ENCODE measurements at regions of chr11 and their contacts with region 1.

Region 1: DNA sequence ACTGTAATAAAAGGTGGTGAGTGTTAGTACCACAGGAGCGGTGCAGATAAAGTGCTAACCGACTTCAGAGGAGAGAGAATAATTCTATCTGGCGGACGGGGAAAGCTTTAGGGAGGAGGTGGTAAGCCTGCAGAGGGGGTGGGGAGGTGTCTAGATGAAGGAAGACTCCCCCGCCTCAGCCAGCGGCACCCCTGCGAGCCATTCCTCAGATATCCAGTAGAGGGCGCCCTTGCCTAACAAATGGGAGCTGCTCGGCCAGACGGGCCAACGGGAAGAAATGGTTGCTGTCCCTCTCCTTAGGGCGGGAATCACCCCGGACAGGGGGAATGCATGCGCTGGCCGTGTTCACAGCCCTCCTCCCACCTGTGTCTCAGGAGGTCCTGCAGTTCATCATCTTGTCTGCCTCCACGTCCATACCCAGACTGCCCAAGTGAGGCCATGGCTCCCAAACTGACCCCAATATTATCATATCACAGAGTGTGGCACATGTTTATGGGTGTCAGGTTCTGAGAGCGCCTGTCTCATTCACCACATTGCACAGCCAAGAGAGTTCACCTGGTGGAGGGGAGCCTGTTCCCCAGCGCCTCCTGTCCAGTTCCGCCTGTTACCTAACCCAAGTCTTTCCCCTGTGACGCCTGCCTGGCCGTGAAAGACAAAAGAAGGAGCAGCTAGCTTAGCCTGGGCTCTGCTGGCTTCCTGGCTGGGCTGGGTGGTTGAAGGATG is 85.5 kb downstream of the ST3GAL4 start:
- DNase-seq: peak; percentile 90 to 97 (median 95)
- H3K4me3 ChIP-seq: peak overlapping the region in 1 of 3 donors; percentile 14
- H3K27ac ChIP-seq: no peak overlapping the region
- H3K4me1 ChIP-seq: peaks cover 0 to 3% (median 0%) of the 10 kb centered on the region in 3 donors
- H3K27me3 ChIP-seq: no peaks in the 10 kb centered on the region
- CTCF ChIP-seq: peak; percentile 95

Region 2: GRCh38 chr11:126502159-126502558 is 61.2 kb after region 1 on chr11:
- intact Hi-C with region 1: loop called (anchors 10 kb)
- DNase-seq: no peak
- H3K4me3 ChIP-seq: no peak overlapping the region
- H3K27ac ChIP-seq: no peak overlapping the region
- H3K4me1 ChIP-seq: no peaks in the 10 kb centered on the region
- H3K27me3 ChIP-seq: no peaks in the 10 kb centered on the region
- CTCF ChIP-seq: no peak

Region 3: GRCh38 chr11:126834149-126834548 is 393.2 kb after region 1 on chr11:
- intact Hi-C with region 1: no loop called
- DNase-seq: no peak
- H3K4me3 ChIP-seq: no peak overlapping the region
- H3K27ac ChIP-seq: no peak overlapping the region
- H3K4me1 ChIP-seq: peaks cover 0 to 6% (median 0%) of the 10 kb centered on the region in 3 donors
- H3K27me3 ChIP-seq: no peaks in the 10 kb centered on the region
- CTCF ChIP-seq: no peak

Region 4: DNA sequence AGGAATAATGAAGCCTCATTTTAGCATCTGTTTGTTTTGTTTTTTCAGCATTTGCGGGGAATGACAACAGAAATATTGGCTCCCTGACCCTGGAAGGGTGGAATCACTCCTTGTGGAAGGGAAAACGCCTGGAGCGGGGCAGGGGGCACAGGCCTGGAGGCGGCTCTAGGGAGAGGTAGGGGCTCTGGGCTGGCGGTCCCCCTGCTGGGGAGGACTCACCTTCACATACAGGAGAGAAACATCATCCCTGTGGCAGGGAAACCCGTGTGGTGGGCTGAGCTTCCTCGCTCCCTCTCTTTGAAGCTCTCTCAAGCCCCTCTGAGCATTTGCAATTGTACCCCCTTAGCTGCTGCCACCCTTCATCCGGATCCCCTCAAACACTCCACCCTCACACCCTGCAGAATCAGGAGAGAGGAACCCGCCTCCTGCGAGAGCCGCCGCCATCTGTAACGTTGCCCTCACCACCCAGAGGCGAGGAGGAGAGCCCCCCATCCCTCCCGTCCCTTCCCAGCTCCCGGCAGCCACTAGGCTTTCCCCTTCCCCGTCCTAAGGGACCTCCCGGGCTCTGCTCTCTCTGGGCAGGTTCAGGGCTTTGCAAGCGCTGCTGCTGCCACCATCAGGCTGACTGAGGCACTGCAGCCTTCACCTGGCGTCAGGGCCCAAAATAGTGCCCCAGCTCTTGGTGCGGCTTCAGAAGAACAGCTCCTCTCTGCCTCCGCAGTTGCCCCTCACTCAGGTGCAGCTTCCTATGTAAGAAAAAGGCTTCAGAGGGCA is 549.2 kb after region 1 on chr11:
- intact Hi-C with region 1: loop called (anchors 10 kb)
- DNase-seq: peak; percentile 85 to 91 (median 88)
- H3K4me3 ChIP-seq: no peak overlapping the region
- H3K27ac ChIP-seq: no peak overlapping the region
- H3K4me1 ChIP-seq: no peaks in the 10 kb centered on the region
- H3K27me3 ChIP-seq: no peaks in the 10 kb centered on the region
- CTCF ChIP-seq: peak; percentile 94

Region 5: DNA sequence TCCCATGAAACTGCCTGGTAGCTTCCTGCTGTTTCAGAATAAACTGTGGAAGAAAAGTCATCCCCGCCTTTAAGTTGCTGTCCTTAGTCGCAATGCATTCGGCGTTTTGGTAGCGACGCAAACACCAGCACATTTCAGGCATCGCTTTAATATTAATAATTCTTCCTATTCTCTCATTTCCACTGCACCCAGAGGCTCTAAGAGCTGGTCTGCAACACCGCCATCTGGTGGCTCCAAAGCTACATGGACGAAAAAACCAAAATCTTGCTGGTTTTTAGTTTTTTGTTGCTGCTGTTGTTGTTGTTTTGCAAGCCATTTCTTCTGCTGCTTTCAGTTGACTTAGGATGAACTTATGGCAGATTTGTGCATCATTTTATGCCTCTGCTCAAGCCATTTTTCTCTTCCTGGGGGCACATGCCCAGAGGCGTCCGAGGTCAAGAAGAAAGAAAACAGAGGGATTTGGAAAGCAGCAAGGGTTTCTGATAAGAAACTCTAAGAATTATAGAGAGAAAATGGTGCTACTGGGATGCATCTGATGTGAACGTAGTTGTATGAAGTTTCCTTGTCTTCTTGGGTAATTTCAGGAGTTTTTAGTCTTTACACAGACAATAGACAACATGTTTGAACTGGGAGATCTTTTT is 905.0 kb after region 1 on chr11:
- intact Hi-C with region 1: loop called (anchors 10 kb)
- DNase-seq: peak in 3 of 5 donors; percentile 16 to 58 (median 39)
- H3K4me3 ChIP-seq: no peak overlapping the region
- H3K27ac ChIP-seq: no peak overlapping the region
- H3K4me1 ChIP-seq: no peaks in the 10 kb centered on the region
- H3K27me3 ChIP-seq: no peaks in the 10 kb centered on the region
- CTCF ChIP-seq: peak; percentile 63